ENCODE measurements at regions of chr3 and their contacts with region 1.

Region 1: DNA sequence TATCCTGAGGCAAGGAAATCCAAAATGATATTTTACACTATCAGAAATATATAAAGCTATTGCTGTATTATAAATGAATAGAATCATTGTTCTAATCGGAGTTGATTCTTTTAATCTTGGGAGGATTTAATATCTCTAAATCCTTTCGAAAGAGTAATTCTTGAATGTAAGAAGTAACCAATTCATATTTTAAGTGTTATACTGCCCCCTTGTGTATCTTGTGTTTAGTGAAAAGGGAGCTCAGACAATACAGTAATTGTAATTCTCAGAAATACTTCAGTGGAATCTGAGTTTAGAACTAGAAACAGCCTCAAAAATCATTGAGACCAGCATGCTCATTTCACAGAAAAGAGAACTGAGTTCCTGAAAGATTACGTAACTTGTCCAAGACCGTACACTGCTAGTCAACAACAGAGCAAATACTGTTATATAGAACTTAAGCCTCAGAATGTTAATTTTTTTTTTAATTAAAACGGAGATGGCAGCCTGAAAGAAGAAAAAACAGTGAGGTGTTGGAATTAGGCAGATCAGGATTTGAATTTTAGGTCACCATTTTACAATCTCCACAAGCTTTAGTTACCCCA is 42.9 kb downstream of the PLCH1 start:
- DNase-seq: no peak
- ATAC-seq: peak; percentile 53
- H3K4me3 Mint-ChIP-seq: no peak overlapping the region
- H3K27ac Mint-ChIP-seq: no peak overlapping the region
- H3K4me1 Mint-ChIP-seq: no peaks in the 10 kb centered on the region
- H3K27me3 Mint-ChIP-seq: no peaks in the 10 kb centered on the region

Region 2: GRCh38 chr3:154334973-154335420 is 1367.0 kb before region 1 on chr3:
- CTCF ChIA-PET with region 1: no interaction called
- POLR2A ChIA-PET with region 1: no interaction called
- intact Hi-C with region 1: loop called in 1 of 2 experiments (anchors 2 kb)
- DNase-seq: no peak
- ATAC-seq: no peak
- H3K4me3 Mint-ChIP-seq: no peak overlapping the region
- H3K27ac Mint-ChIP-seq: no peak overlapping the region
- H3K4me1 Mint-ChIP-seq: no peaks in the 10 kb centered on the region
- H3K27me3 Mint-ChIP-seq: peaks cover 18% of the 10 kb centered on the region

Region 3: GRCh38 chr3:154758109-154758868 is 943.7 kb before region 1 on chr3:
- CTCF ChIA-PET with region 1: interaction called, 4 read pairs
- POLR2A ChIA-PET with region 1: no interaction called
- intact Hi-C with region 1: loop called in 1 of 2 experiments (anchors 10 kb)
- DNase-seq: no peak
- ATAC-seq: no peak
- H3K4me3 Mint-ChIP-seq: no peak overlapping the region
- H3K27ac Mint-ChIP-seq: no peak overlapping the region
- H3K4me1 Mint-ChIP-seq: no peaks in the 10 kb centered on the region
- H3K27me3 Mint-ChIP-seq: no peaks in the 10 kb centered on the region

Region 4: DNA sequence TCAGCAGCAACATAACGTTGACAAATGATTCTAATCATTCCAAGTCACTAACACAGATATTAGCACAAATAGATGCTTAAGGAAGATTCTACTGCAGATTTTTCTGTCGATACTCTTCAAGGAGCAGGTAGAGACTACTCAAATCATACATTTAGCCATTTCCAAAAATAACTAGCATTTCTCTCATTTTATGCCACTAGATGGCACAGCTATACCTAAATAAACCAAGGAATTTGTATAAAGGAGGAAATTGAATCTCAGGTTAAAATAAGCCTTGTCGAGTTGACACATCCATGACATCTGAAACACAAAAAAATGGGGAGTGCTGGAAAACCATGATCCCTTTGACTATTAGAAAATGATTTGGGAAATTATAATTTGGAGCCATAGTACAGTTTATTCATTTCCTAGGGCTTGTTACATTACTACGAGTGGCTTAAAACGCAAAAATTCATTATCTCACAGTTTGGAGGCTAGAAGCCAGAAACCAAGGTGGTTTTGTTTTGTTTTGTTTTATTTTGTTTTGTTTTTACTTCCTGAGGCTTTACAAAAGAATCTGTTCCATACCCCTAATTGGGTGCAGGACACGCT is 349.0 kb before region 1 on chr3:
- CTCF ChIA-PET with region 1: interaction called, 36 read pairs
- POLR2A ChIA-PET with region 1: interaction called, 3 read pairs
- intact Hi-C with region 1: loop called (anchors 1 kb)
- DNase-seq: no peak
- ATAC-seq: no peak
- H3K4me3 Mint-ChIP-seq: no peak overlapping the region
- H3K27ac Mint-ChIP-seq: no peak overlapping the region
- H3K4me1 Mint-ChIP-seq: no peaks in the 10 kb centered on the region
- H3K27me3 Mint-ChIP-seq: peaks cover 2% of the 10 kb centered on the region

Region 5: DNA sequence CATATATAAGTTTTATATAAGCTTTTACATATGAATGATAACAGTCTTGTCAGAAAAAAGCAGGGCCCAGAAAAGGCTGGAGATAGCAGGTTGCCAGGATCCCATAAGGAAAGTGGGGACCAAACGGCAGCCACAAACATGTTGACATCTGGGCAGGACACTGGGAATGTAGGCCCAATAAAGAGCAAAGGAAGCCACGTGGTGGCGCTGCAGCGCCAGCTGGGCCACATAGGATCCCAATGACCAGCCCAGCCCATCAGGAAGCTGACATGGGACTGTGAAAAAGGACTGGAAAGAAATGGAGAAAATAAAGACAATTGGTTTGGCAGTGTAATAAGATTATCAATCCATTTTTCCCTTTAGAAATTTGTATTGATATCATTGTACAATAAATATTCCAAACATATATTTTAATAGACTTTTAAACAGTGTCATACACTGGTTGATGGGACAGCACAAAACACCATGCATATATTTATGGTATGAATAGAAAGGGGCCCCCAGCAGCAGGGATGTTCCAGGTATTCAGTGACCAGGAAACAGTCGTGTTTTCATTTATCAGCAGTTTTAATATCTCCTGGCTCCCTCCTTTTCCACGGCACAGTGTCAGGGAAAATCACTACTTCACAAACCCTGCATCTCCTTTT is 319.5 kb before region 1 on chr3:
- CTCF ChIA-PET with region 1: interaction called, 12 read pairs
- POLR2A ChIA-PET with region 1: no interaction called
- intact Hi-C with region 1: loop called in 1 of 2 experiments (anchors 1 kb)
- DNase-seq: peak; percentile 51
- ATAC-seq: no peak
- H3K4me3 Mint-ChIP-seq: no peak overlapping the region
- H3K27ac Mint-ChIP-seq: no peak overlapping the region
- H3K4me1 Mint-ChIP-seq: no peaks in the 10 kb centered on the region
- H3K27me3 Mint-ChIP-seq: no peaks in the 10 kb centered on the region

Region 6: GRCh38 chr3:155712008-155712407 is 10.0 kb after region 1 on chr3:
- CTCF ChIA-PET with region 1: interaction called, 21 read pairs
- POLR2A ChIA-PET with region 1: no interaction called
- intact Hi-C with region 1: no loop called
- DNase-seq: no peak
- ATAC-seq: no peak
- H3K4me3 Mint-ChIP-seq: no peak overlapping the region
- H3K27ac Mint-ChIP-seq: no peak overlapping the region
- H3K4me1 Mint-ChIP-seq: no peaks in the 10 kb centered on the region
- H3K27me3 Mint-ChIP-seq: no peaks in the 10 kb centered on the region

Region 7: DNA sequence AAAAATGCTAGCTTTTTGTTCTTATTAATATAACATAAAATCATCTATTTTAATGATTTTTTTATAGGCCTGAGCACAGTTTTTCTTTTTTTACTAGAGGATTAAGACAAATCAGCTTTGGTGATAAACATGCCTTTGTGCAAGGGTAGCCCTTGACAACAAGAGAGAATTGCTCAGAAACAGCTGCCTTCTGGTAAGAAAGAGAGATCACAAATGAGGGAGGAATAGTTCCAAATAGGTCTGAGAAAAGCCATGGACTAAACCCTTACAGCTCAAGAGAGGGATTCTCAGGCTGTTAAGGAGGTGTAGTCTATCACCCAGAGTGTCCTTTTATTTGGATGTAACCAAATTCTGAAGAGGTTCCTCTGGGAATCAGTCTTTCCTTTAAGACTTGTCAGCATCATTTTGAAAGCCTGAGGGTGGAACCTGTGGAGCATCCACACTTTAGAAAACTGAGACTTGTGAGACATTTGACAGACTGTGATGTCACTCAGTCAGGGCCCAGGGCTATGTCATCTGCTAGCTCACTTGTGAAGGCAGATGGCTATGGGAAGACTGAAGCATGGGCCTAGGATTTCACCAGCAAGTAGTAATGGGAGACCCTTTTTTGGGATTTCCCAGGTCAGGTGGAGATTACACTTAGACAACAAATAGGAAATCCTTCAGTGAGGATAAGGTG is 315.5 kb after region 1 on chr3:
- CTCF ChIA-PET with region 1: no interaction called
- POLR2A ChIA-PET with region 1: no interaction called
- intact Hi-C with region 1: no loop called
- DNase-seq: no peak
- ATAC-seq: no peak
- H3K4me3 Mint-ChIP-seq: no peak overlapping the region
- H3K27ac Mint-ChIP-seq: no peak overlapping the region
- H3K4me1 Mint-ChIP-seq: no peaks in the 10 kb centered on the region
- H3K27me3 Mint-ChIP-seq: peaks cover 2% of the 10 kb centered on the region